KBM-7 (cell line): ENCODE measurements at regions of chr12 and their contacts with region 1.

Region 1: DNA sequence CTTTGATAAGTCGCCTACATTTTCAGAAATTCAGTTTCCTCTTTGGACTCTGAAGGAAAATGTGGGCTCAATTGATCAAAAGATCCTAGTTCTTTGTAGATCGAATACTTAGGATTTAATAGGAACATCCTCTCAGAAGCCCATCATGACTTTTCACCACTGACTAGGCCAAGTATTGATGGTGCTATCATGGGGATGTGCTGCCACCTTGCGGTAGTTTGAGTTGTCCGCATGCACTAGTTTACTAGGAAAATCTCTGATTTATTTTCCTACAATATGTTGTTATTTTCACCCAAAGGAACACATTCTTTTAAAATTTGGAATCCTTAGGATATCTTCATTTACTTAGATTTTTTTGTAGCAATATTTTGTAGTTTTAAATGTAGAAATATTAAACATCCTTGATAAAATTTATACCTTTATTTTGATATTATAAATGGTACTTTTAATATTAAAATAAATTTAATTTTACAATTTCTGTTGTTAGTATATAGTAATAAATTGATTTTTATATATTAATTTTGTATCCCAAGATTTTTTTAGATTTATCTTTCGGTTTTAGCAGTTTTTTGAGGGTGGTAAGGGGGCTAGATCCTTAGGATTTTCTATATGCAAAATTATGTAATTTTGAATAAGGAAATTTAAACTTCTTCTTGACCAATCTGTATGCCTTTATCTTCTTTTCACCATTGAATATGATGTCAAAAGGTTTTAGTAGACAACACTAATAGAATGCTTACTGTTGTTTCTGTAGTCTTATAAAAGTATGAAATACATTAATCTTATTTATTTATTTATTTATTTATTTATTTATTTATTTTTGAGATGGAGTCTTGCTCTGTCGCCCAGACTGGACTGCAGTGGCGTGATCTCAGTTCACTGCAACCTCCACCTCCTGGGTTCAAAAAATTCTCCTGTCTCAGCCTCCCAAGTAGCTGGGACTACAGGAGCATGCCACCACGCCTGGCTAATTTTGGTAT is 52.9 kb upstream of the OR9K2 start:
- DNase-seq: peak; percentile 61

Region 2: GRCh38 chr12:54526812-54527630 is 546.3 kb before region 1 on chr12:
- in situ Hi-C with region 1: no loop called
- DNase-seq: peak; percentile 73

Region 3: GRCh38 chr12:54993161-54993835 is 80.0 kb before region 1 on chr12:
- in situ Hi-C with region 1: loop called (anchors 10 kb)
- DNase-seq: peak; percentile 79

Region 4: DNA sequence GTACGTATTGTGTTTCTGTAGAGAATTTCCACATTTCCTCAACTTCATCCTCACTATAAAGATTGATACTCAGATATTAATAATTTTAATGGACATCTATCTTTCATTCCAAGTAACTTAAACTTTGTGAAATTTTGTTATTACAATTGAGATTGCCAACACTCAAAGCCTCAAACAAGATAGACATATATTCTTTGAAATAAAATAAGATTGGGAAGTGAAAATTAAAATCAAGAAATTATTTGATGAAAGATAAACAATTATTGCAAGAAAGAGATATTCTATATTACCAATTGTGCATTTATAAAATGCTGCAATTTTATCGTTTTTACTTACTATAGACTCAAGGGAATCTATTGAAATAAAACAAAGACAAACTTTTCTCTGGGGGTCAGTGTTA is 223.1 kb after region 1 on chr12 and contains the start of gene OR6C6:
- in situ Hi-C with region 1: no loop called
- DNase-seq: no peak